ENCODE measurements at regions of chr9 and their contacts with region 1.

Region 1: DNA sequence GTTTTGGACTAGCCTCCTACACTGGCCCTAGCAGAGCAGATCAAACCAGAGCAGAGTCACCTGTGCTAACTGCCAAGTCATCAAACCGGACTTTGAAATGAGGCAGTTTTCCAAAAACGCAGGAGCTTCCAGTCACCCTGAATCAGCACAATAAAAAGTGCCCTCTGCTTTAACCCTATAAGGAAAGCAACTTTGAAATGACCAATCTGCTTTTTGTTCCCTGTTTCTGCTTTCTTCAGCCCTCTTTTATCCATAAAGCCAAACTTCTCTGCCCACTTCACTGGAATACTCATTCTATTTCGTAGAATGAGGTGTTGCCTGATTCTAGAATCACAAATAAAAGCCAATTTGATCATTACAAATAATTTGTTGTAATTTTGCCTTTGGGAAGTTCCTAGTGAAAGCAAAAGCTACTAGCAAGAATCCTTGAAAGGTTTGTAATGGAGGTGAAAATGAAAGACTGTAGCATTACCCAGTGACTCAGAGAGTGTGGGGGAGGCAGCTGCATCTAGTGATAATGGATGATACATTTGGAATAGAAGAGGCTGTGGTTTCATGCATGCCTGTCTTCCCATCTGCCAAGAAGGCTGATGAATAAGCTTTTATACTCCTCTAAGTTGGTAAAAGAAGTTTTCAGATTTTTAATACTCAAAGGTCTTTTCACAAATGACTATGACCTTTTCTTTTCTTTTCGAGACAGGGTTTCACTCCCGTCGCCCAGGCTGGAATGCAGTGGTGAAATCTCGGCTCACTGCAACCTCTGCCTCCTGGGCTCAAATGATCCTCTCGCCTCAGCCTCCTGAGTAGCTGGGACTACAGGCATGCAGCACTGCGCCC is 14.9 kb downstream of the SPAAR start:
- DNase-seq: peak; percentile 76
- H3K4me3 ChIP-seq: peak overlapping the region; percentile 38
- H3K27ac ChIP-seq: peak overlapping the region; percentile 97
- H3K27me3 ChIP-seq: no peaks in the 10 kb centered on the region
- CTCF ChIP-seq: no peak

Region 2: DNA sequence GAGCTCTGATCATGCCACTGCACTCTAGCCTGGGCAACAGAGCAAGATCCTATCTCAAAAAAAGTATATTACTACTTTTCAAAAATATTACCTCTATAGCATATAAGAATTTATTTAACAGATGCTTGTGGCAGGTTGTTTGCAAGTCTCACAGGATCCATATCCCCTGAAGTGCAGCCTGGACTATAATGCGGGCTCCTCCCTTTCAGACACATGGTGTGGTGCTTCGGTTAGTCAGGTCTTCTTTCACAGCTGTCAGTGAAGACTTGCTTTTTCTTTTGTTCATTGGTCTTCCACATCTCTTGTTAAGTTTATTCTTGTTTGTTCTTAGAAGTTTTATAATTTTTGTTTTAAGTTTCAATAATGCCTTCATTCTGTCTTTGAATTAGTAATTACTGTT is 27.6 kb before region 1 on chr9:
- CTCF ChIA-PET with region 1: no interaction called
- POLR2A ChIA-PET with region 1: no interaction called
- DNase-seq: no peak
- H3K4me3 ChIP-seq: no peak overlapping the region
- H3K27ac ChIP-seq: no peak overlapping the region
- H3K27me3 ChIP-seq: peaks cover 26% of the 10 kb centered on the region
- CTCF ChIP-seq: no peak

Region 3: DNA sequence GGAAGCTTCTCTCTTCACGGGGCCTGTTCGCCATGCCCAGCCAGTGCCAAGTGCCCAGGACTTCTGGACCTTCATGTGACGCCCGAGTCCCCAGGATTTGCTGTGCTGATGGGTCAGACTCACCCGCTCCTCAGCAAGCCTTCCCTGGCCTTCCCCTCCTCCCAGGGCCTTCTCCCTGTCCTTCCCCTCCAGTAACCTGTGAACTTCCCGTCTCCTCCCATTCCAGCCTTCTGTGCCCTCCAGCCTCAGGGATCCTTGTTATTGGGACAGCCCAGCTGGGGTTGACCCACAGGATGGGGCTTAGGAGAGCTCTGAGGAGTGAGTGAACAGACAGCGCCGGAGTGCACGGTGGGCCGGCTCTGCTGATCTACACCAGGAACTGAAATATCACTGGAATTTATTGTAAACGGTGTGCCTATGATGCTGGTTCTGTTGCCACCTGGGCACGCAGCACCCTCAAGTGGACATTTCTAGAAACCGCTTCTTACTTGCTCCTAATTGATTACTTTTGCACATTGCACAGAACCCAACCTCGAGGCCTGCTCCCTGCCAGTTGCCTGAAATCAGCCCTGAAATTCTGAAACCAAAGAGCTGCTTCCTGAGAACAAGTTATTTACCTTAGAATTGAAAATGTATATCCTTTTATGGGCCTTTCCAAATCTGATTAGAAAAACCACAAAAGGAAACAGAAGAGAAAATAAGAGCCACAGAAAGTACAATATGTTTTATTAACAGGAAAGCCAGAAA is 13.4 kb before region 1 on chr9:
- CTCF ChIA-PET with region 1: interaction called, 6 read pairs
- POLR2A ChIA-PET with region 1: interaction called, 25 read pairs
- DNase-seq: no peak
- H3K4me3 ChIP-seq: no peak overlapping the region
- H3K27ac ChIP-seq: no peak overlapping the region
- H3K27me3 ChIP-seq: no peaks in the 10 kb centered on the region
- CTCF ChIP-seq: peak; percentile 62

Region 4: DNA sequence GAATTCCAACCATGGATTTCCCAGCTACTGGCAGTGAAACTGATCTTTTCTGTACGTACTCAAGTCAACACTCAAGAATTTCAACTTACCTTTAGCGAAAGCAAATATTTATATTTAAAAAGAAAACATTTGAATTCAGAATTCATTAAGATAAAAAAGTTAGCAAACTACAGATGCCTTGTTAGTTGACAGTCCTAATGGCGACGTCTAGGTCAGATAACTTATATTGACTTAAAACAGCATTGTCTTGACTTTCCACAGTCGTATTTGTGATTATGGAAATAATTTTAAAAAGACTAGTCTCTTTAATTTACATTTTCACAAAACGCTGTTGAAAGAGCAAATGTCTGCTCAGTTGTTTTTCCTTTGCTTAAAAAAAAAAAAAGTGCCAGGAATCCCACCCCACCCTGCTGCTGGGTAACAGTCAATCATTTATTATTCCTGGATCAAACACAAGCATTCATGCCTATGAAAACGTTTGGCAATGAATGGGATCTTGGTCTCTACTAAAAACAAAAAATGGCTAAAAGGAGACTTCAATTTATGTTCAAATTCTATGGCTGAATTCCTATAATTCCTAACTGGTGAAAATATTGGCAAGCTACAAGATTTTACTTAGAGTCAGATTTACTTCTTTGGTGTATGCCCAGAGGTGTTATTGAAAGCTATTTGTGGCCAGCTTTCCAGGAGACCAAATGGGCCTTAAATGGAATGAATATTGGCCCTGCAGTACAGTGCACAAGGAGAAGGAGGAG is 11.8 kb after region 1 on chr9:
- CTCF ChIA-PET with region 1: interaction called, 3 read pairs
- POLR2A ChIA-PET with region 1: interaction called, 16 read pairs
- DNase-seq: peak; percentile 47
- H3K4me3 ChIP-seq: no peak overlapping the region
- H3K27ac ChIP-seq: peak overlapping the region; percentile 68
- H3K27me3 ChIP-seq: no peaks in the 10 kb centered on the region
- CTCF ChIP-seq: no peak

Region 5: DNA sequence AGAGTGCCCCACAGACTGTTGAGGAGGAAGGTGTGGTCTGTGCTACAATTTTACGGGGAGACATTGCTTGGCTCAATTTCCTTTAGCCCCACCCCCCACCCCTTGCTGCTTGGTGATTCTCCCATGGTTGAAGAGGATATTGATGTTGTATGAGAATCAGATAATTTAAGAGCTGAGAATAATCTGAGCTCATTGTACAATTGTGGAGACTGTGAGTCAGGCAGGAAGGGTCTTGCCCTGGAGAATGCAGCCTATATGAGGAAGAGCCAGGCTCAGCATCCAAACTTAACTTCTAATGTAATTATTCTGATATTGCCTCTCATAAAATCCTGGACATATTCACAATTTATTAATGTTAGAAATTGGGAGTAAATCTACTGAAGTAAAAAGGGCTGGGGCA is 59.9 kb after region 1 on chr9:
- CTCF ChIA-PET with region 1: no interaction called
- POLR2A ChIA-PET with region 1: no interaction called
- DNase-seq: no peak
- H3K4me3 ChIP-seq: no peak overlapping the region
- H3K27ac ChIP-seq: no peak overlapping the region
- H3K27me3 ChIP-seq: peaks cover 16% of the 10 kb centered on the region
- CTCF ChIP-seq: no peak

Measured in AG04450 (cell line).